ENCODE measurements at regions of chr3 and their contacts with region 1.

Region 1: GRCh38 chr3:187714404-187714979 is 12.1 kb upstream of the RTP2 start:
- DNase-seq: peak; percentile 82
- ATAC-seq: peak; percentile 85
- H3K4me3 Mint-ChIP-seq: no peak overlapping the region
- H3K27ac Mint-ChIP-seq: no peak overlapping the region
- H3K4me1 Mint-ChIP-seq: peaks cover 17% of the 10 kb centered on the region
- H3K27me3 Mint-ChIP-seq: peaks cover 6% of the 10 kb centered on the region

Region 2: DNA sequence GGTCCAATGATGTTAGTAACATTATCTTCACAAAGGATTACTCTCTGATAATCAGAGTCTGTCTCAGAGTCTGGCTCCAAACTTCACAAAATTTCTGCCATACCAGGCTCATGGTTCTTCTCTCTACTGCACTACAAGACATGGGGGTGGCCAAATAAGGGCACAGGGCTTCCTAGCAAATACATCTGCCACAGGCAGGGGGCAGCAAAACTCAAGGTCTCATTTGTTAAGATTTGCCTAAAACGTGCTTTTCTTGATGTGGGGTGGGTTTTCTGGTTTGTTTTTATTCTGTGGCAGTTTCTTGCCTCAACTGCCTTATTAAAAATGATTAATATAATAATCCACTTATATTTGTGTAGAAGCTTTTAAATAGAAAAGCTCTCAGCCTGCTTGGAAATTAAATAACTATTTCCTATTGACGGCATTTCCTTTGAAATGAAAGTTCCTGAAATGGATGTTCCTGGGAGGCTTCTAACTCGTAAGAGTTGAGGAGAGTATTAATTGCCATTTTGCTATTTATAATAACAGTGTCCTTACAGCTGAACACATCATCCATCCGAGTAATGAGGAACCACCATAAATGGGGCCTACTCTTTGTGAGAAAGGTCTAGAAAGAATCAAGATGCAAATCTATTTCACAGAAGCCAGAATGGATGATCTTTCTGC is 98.1 kb before region 1 on chr3:
- CTCF ChIA-PET with region 1: interaction called, 14 read pairs
- DNase-seq: peak; percentile 72
- ATAC-seq: peak; percentile 82
- H3K4me3 Mint-ChIP-seq: no peak overlapping the region
- H3K27ac Mint-ChIP-seq: no peak overlapping the region
- H3K4me1 Mint-ChIP-seq: peaks cover 5% of the 10 kb centered on the region
- H3K27me3 Mint-ChIP-seq: peaks cover 16% of the 10 kb centered on the region

Measured in activated CD8-positive, alpha-beta memory T cell treated with anti-CD3 and anti-CD28 coated beads, Interleukin-2, amount 10 ng/mL, durations not matched to agents 7 days and 5 days (primary cell).